ENCODE measurements at regions of chr19 and their contacts with region 1.

Region 1: GRCh38 chr19:44954824-44955586 is at the start of gene CLPTM1:
- DNase-seq: peak; percentile 97 to 99 (median 98)
- H3K4me3 ChIP-seq: peak within 1 kb of the TSS; percentile 91 to 97 (median 97)
- H3K27ac ChIP-seq: peak within 1 kb of the TSS; percentile 92 to 94
- H3K4me1 ChIP-seq: peaks cover 0 to 32% (median 22%) of the 10 kb centered on the region in 3 donors
- H3K27me3 ChIP-seq: no peaks in the 10 kb centered on the region
- CTCF ChIP-seq: no peak
- total RNA-seq, gene CLPTM1: 107 TPM

Region 2: DNA sequence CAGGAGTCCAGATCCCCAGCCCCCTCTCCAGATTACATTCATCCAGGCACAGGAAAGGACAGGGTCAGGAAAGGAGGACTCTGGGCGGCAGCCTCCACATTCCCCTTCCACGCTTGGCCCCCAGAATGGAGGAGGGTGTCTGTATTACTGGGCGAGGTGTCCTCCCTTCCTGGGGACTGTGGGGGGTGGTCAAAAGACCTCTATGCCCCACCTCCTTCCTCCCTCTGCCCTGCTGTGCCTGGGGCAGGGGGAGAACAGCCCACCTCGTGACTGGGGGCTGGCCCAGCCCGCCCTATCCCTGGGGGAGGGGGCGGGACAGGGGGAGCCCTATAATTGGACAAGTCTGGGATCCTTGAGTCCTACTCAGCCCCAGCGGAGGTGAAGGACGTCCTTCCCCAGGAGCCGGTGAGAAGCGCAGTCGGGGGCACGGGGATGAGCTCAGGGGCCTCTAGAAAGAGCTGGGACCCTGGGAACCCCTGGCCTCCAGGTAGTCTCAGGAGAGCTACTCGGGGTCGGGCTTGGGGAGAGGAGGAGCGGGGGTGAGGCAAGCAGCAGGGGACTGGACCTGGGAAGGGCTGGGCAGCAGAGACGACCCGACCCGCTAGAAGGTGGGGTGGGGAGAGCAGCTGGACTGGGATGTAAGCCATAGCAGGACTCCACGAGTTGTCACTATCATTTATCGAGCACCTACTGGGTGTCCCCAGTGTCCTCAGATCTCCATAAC is 49.4 kb before region 1 on chr19 and contains the start of gene APOE:
- intact Hi-C with region 1: loop called (anchors 5 kb)
- DNase-seq: peak in 4 of 5 donors; percentile 61 to 76 (median 66)
- H3K4me3 ChIP-seq: peak within 1 kb of the TSS in 2 of 3 donors; percentile 78 to 86
- H3K27ac ChIP-seq: peak within 1 kb of the TSS; percentile 17 to 67
- H3K4me1 ChIP-seq: peaks cover 0 to 4% (median 0%) of the 10 kb centered on the region in 3 donors
- H3K27me3 ChIP-seq: no peaks in the 10 kb centered on the region
- CTCF ChIP-seq: no peak
- total RNA-seq, gene APOE: 122 TPM

Region 3: DNA sequence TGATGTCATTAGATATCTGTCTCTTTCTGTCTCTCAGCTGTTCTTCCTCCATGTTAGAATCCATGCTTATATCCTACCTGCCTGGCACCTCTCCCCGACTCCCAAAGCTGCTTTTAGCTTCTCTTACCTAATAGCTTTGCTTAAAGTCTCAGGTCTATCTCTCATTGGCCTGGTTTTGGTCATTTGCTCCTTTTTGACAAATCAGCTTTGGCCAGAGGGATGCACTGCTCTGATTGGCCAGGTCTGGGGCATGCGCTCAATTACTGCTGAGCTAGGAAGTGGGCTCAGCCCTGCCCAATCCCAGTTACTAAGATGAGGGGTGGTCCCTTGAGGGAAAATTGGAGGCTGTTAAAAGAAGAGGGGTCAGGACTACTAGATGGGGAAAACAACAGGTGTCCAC is 72.4 kb after region 1 on chr19:
- intact Hi-C with region 1: no loop called
- DNase-seq: no peak
- H3K4me3 ChIP-seq: no peak overlapping the region
- H3K27ac ChIP-seq: no peak overlapping the region
- H3K4me1 ChIP-seq: no peaks in the 10 kb centered on the region
- H3K27me3 ChIP-seq: no peaks in the 10 kb centered on the region
- CTCF ChIP-seq: no peak